Activated naive CD4-positive, alpha-beta T cell treated with anti-CD3 and anti-CD28 coated beads, Interleukin-2, amount 10 ng/mL, durations not matched to agents 7 days and 5 days (primary cell): ENCODE measurements at regions of chr3 and their contacts with region 1.

Region 1: DNA sequence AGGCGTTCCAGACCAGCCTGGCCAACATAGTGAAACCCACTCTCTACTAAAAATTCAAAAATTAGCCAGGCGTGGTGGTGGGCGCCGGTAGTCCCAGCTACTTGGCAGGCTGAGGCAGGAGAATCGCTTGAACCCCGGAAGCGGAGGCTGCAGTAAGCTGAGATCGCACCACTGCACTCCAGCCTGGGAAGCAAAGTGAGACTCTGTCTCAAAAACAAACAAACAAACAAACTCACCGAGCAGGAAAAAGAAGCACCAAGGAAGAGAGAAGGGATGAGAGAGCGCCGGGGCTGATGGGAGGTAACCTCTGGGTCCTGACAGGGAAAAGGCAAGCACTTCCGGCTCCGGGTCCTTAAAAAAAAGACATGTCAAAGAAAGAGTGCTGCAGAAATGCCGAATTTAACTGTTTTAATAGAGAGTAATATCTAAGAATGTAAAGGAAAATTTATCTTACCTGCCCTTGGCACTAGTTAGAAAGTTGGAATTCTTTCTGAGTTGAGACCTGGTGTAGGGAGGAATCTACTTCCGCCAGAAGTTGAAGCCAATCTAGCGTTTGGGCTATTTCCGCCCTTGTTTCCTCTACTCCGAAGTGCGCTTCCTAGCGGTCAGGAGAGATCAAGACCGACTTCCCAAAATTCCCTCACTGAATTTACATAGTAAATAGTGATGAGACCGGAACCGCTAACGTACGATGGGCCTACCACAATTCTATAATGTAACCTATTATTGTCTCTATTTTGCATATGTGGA is 29.1 kb downstream of the EFCAB12 start:
- DNase-seq: peak; percentile 82
- H3K4me3 Mint-ChIP-seq: peak overlapping the region; percentile 94
- H3K27ac Mint-ChIP-seq: peak overlapping the region; percentile 92
- H3K4me1 Mint-ChIP-seq: peaks cover 37% of the 10 kb centered on the region
- H3K27me3 Mint-ChIP-seq: no peaks in the 10 kb centered on the region

Region 2: GRCh38 chr3:129383292-129383860 is 15.9 kb before region 1 on chr3:
- CTCF ChIA-PET with region 1: interaction called, 15 read pairs
- DNase-seq: peak; percentile 57
- H3K4me3 Mint-ChIP-seq: no peak overlapping the region
- H3K27ac Mint-ChIP-seq: no peak overlapping the region
- H3K4me1 Mint-ChIP-seq: no peaks in the 10 kb centered on the region
- H3K27me3 Mint-ChIP-seq: no peaks in the 10 kb centered on the region

Region 3: GRCh38 chr3:129560901-129561594 is 161.7 kb after region 1 on chr3:
- CTCF ChIA-PET with region 1: no interaction called
- DNase-seq: no peak
- H3K4me3 Mint-ChIP-seq: no peak overlapping the region
- H3K27ac Mint-ChIP-seq: no peak overlapping the region
- H3K4me1 Mint-ChIP-seq: peaks cover 4% of the 10 kb centered on the region
- H3K27me3 Mint-ChIP-seq: peaks cover 32% of the 10 kb centered on the region